Heart right ventricle (tissue), 16 donors: ENCODE measurements at regions of chr14 and their contacts with region 1.

Region 1: GRCh38 chr14:95389471-95390011 is 69.8 kb upstream of the CLMN start:
- DNase-seq: peak; percentile 77 to 93
- ATAC-seq: peak; percentile 88 to 97 (median 96)
- H3K4me3 ChIP-seq: no peak overlapping the region
- H3K27ac ChIP-seq: peak overlapping the region; percentile 72 to 94 (median 83)
- H3K4me1 ChIP-seq: peaks cover 10 to 34% (median 15%) of the 10 kb centered on the region in 9 donors
- H3K27me3 ChIP-seq: peaks cover 0 to 4% (median 0%) of the 10 kb centered on the region in 7 donors
- CTCF ChIP-seq: no peak

Region 2: GRCh38 chr14:95424529-95424928 is 35.0 kb after region 1 on chr14:
- intact Hi-C with region 1: loop called in 1 of 10 experiments (anchors 1 kb)
- DNase-seq: no peak
- ATAC-seq: peak in 4 of 8 donors; percentile 20 to 53 (median 42)
- H3K4me3 ChIP-seq: no peak overlapping the region
- H3K27ac ChIP-seq: no peak overlapping the region
- H3K4me1 ChIP-seq: peaks cover 0 to 4% (median 0%) of the 10 kb centered on the region in 9 donors
- H3K27me3 ChIP-seq: no peaks in the 10 kb centered on the region
- CTCF ChIP-seq: no peak